ENCODE measurements at regions of chr11 and their contacts with region 1.

Region 1: DNA sequence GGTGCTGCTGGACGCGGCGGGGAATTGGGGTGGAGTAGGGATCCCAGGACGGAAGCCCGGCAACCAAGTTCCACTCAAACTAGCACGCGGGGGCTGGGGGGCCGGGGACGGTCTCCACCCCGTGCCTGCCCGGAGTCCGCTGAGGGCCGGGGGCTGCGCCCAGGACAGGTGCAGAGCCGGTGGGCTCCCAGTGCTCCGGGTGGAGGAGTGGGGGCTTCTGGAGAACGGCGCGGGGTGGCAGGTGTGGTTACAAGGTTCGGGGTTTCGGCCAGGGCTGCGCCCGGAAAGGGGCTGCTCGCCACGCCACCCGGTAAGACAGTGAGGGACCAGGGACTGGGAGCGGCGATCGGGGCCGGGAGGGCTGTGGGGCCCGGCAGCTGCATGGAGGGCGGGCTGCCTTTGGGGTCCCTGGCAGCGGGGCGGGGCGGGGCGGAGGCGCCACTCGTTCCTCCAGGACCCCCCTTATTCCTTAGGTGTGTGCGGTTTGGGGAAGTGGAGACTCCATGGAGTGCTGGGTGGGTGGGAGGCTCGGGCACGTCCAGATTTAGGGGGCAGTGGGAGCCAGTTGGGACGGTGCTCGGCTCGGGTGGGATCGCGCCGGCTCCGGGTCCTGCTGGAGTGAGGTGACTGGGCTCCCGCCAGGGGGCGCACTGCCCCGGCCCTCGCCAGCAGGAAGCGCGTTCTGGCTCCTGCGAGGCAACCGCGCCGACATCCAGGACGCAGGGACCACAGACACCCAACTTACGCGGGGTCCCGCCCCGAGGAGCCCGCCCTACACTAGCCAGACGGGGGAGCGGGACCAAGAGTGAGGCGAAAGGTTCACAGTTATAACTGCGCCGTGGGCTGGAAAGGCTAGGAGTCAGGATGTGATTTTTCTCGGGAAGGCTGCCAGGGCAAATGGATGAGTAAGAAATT is 868 bp downstream of the TSPAN18 start:
- DNase-seq: peak; percentile 14 to 82
- H3K4me3 ChIP-seq: peak overlapping the region; percentile 55 to 71
- H3K27ac ChIP-seq: no peak overlapping the region
- H3K4me1 ChIP-seq: peaks cover 3 to 14% of the 10 kb centered on the region in 2 donors
- H3K27me3 ChIP-seq: no peaks in the 10 kb centered on the region
- CTCF ChIP-seq: peak; percentile 85 to 98 (median 93)

Region 2: DNA sequence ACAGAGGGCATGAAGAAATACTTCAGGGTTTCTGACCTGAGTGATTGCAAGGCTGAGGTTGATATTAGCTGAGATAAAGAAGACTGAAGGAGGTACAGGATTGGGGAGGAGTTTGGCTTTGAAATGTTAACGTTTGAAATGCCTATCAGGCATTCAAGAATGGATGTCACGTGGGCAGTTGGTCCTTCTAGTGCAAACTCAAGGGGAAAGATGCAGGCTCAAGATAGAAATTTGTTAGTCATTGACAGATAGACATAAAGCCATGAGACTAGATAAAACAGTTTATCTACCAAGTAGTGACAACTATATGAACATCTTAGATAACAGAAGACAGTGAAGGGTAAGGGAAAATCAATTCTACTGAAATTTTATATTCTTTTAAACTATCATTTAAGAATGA is 1345.8 kb before region 1 on chr11:
- intact Hi-C with region 1: no loop called
- DNase-seq: no peak
- H3K4me3 ChIP-seq: no peak overlapping the region
- H3K27ac ChIP-seq: no peak overlapping the region
- H3K4me1 ChIP-seq: no peaks in the 10 kb centered on the region
- H3K27me3 ChIP-seq: no peaks in the 10 kb centered on the region
- CTCF ChIP-seq: no peak

Region 3: GRCh38 chr11:44556735-44557409 is 170.8 kb before region 1 on chr11:
- intact Hi-C with region 1: loop called (anchors 10 kb)
- DNase-seq: peak in 1 of 2 donors; percentile 80
- H3K4me3 ChIP-seq: no peak overlapping the region
- H3K27ac ChIP-seq: no peak overlapping the region
- H3K4me1 ChIP-seq: peaks cover 0 to 2% of the 10 kb centered on the region in 2 donors
- H3K27me3 ChIP-seq: no peaks in the 10 kb centered on the region
- CTCF ChIP-seq: peak; percentile 76 to 87 (median 83)

Region 4: DNA sequence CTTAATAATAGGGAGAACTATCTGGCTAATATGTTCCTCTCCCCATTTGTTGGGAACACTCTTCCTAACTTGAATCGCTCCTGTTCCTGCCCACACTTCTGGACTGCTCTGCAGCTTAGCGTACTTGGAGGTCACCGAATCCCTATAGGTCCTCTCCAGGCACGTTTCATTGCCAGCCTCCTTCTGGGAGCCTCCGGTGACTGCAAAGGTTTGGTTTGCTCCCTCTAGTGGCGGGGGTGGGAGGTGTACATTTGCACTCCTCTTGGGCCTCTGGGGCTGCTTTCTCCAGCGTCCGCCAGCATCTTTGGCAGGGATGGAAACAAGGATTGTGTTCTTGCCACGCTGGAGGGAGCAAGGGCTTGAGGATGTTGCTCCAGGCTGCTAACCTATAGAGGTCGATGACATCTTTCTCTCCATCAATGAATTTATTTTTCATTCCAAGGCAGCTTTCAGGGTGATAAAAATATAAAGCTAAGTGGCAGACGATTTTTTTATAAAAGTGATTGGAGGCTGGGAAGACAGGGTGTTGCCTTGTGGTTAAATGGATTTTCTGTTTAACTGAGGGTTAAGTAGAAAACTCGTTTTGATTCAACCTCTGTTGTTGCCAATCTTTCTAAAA is 47.8 kb after region 1 on chr11:
- intact Hi-C with region 1: loop called (anchors 2 kb)
- DNase-seq: peak in 1 of 2 donors; percentile 65
- H3K4me3 ChIP-seq: no peak overlapping the region
- H3K27ac ChIP-seq: no peak overlapping the region
- H3K4me1 ChIP-seq: peaks cover 0 to 11% of the 10 kb centered on the region in 2 donors
- H3K27me3 ChIP-seq: no peaks in the 10 kb centered on the region
- CTCF ChIP-seq: peak in 2 of 3 experiments; percentile 44 to 53

Region 5: GRCh38 chr11:44823006-44823405 is 95.4 kb after region 1 on chr11:
- intact Hi-C with region 1: no loop called
- DNase-seq: no peak
- H3K4me3 ChIP-seq: no peak overlapping the region
- H3K27ac ChIP-seq: no peak overlapping the region
- H3K4me1 ChIP-seq: no peaks in the 10 kb centered on the region
- H3K27me3 ChIP-seq: no peaks in the 10 kb centered on the region
- CTCF ChIP-seq: no peak

Region 6: GRCh38 chr11:44852159-44852747 is 124.6 kb after region 1 on chr11:
- intact Hi-C with region 1: no loop called
- DNase-seq: no peak
- H3K4me3 ChIP-seq: no peak overlapping the region
- H3K27ac ChIP-seq: no peak overlapping the region
- H3K4me1 ChIP-seq: no peaks in the 10 kb centered on the region
- H3K27me3 ChIP-seq: no peaks in the 10 kb centered on the region
- CTCF ChIP-seq: no peak

Region 7: GRCh38 chr11:44893846-44894617 is 166.4 kb after region 1 on chr11:
- intact Hi-C with region 1: loop called (anchors 1 kb)
- DNase-seq: no peak
- H3K4me3 ChIP-seq: no peak overlapping the region
- H3K27ac ChIP-seq: peak overlapping the region; percentile 13 to 39
- H3K4me1 ChIP-seq: no peaks in the 10 kb centered on the region
- H3K27me3 ChIP-seq: no peaks in the 10 kb centered on the region
- CTCF ChIP-seq: peak; percentile 73 to 75 (median 73)

Region 8: GRCh38 chr11:44911029-44911814 is 183.6 kb after region 1 on chr11:
- intact Hi-C with region 1: loop called (anchors 1 kb)
- DNase-seq: peak; percentile 51 to 94
- H3K4me3 ChIP-seq: no peak overlapping the region
- H3K27ac ChIP-seq: peak overlapping the region in 1 of 2 donors; percentile 26
- H3K4me1 ChIP-seq: peaks cover 0 to 11% of the 10 kb centered on the region in 2 donors
- H3K27me3 ChIP-seq: no peaks in the 10 kb centered on the region
- CTCF ChIP-seq: peak; percentile 77 to 85 (median 78)

Measured in ascending aorta (tissue), 2 donors.